Endothelial cell of umbilical vein (primary cell): ENCODE measurements at regions of chr4 and their contacts with region 1.

Region 1: DNA sequence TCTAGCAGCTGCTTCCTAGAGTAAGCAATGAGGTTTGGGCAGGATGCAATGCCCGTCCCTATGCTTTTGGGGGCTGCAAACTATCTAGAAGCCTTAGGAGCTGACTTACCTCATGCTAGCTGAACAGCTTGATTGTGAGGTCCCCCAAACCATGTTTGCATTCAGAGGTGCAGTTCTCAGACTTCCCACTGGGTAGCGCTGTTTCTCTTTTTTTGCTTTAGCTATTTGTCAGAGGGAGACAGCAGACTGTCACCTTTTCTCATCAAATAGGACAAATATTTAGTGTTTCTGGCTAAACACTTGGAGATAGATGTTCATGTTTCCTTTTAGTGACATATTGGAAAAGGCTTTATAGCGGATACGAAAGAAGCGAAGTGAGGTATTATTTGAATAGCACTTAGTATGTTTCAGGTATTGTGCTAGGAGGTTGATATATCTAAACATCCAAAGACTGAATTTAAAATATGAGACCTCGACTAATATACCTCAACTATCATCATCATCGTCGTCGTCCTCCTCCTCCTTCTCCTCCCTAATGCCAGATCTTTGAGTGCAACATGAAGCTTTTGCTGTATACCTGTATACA is 18.7 kb upstream of the TMEM192 start:
- DNase-seq: peak; percentile 73
- H3K4me3 ChIP-seq: no peak overlapping the region
- H3K27ac ChIP-seq: no peak overlapping the region
- H3K4me1 ChIP-seq: no peaks in the 10 kb centered on the region
- H3K27me3 ChIP-seq: peaks cover 5 to 12% of the 10 kb centered on the region in 2 experiments
- CTCF ChIP-seq: peak; percentile 81 to 84
- POLR2A ChIP-seq: no peak

Region 2: GRCh38 chr4:163795885-163796284 is 1335.5 kb before region 1 on chr4:
- CTCF ChIA-PET with region 1: no interaction called
- POLR2A ChIA-PET with region 1: no interaction called
- dilution Hi-C with region 1: no loop called
- intact Hi-C with region 1: no loop called
- DNase-seq: no peak
- H3K4me3 ChIP-seq: no peak overlapping the region
- H3K27ac ChIP-seq: no peak overlapping the region
- H3K4me1 ChIP-seq: no peaks in the 10 kb centered on the region
- H3K27me3 ChIP-seq: no peaks in the 10 kb centered on the region
- CTCF ChIP-seq: no peak
- POLR2A ChIP-seq: no peak

Region 3: GRCh38 chr4:165085946-165086345 is 45.4 kb before region 1 on chr4:
- CTCF ChIA-PET with region 1: no interaction called
- POLR2A ChIA-PET with region 1: no interaction called
- dilution Hi-C with region 1: no loop called
- intact Hi-C with region 1: no loop called
- DNase-seq: no peak
- H3K4me3 ChIP-seq: no peak overlapping the region
- H3K27ac ChIP-seq: no peak overlapping the region
- H3K4me1 ChIP-seq: no peaks in the 10 kb centered on the region
- H3K27me3 ChIP-seq: no peaks in the 10 kb centered on the region
- CTCF ChIP-seq: no peak
- POLR2A ChIP-seq: no peak

Region 4: GRCh38 chr4:165118256-165118909 is 13.0 kb before region 1 on chr4:
- CTCF ChIA-PET with region 1: interaction called, 47 read pairs
- POLR2A ChIA-PET with region 1: no interaction called
- dilution Hi-C with region 1: no loop called
- intact Hi-C with region 1: no loop called
- DNase-seq: no peak
- H3K4me3 ChIP-seq: no peak overlapping the region
- H3K27ac ChIP-seq: no peak overlapping the region
- H3K4me1 ChIP-seq: peaks cover under 1% of the 10 kb centered on the region
- H3K27me3 ChIP-seq: no peaks in the 10 kb centered on the region
- CTCF ChIP-seq: no peak
- POLR2A ChIP-seq: no peak

Region 5: DNA sequence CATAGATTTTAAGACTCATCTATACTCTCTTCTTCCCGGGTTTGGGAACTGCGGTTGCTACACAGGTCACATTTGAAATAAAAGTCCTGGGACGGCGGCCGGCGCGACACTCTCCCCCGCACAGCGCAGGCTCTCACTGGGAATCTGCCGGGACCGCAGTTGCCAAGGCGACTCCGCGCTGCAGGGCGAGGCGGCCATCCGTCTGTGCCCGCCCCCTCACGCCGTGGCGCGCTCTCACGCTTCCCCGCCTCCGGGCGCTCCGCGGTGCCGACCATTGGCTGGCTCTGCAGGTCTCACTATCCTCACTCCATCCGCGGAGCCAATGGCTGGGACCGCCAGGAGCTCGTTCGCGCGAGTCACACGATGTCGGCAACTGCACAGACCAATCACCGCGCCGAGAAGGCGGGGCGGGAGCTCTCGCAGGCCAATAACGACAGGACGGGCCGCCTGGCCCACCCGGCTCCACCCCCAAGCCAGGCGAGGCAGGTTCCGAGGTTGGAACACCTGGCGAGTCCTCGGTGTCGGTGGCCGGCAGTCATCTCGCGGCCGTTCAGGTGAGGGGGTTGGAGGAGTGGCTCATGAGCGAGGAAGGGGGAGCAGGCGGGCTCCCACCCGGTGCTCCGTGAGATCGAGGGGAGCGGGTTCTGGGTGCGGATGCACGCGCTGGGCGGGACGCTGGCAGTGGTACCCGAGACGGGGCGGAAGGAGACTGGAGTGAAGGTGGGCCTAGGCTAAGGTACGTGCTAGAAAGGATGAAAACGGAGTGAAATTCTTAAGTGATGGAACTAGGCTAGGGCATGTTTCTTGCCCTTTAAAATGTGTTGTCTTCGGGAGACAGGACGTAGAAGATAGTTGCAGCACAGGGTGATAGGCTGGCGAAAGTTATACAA is 196.1 kb after region 1 on chr4 and contains the start of gene MSMO1:
- CTCF ChIA-PET with region 1: interaction called, 50 read pairs
- POLR2A ChIA-PET with region 1: no interaction called
- dilution Hi-C with region 1: no loop called
- intact Hi-C with region 1: loop called (anchors 1 kb)
- DNase-seq: peak; percentile 100
- H3K4me3 ChIP-seq: peak within 1 kb of the TSS; percentile 80 to 98 (median 96)
- H3K27ac ChIP-seq: peak within 1 kb of the TSS; percentile 64
- H3K4me1 ChIP-seq: peaks cover 58% of the 10 kb centered on the region
- H3K27me3 ChIP-seq: no peaks in the 10 kb centered on the region
- CTCF ChIP-seq: no peak
- POLR2A ChIP-seq: no peak
- total RNA-seq, gene MSMO1: 109 and 127 TPM in 2 replicates

Region 6: DNA sequence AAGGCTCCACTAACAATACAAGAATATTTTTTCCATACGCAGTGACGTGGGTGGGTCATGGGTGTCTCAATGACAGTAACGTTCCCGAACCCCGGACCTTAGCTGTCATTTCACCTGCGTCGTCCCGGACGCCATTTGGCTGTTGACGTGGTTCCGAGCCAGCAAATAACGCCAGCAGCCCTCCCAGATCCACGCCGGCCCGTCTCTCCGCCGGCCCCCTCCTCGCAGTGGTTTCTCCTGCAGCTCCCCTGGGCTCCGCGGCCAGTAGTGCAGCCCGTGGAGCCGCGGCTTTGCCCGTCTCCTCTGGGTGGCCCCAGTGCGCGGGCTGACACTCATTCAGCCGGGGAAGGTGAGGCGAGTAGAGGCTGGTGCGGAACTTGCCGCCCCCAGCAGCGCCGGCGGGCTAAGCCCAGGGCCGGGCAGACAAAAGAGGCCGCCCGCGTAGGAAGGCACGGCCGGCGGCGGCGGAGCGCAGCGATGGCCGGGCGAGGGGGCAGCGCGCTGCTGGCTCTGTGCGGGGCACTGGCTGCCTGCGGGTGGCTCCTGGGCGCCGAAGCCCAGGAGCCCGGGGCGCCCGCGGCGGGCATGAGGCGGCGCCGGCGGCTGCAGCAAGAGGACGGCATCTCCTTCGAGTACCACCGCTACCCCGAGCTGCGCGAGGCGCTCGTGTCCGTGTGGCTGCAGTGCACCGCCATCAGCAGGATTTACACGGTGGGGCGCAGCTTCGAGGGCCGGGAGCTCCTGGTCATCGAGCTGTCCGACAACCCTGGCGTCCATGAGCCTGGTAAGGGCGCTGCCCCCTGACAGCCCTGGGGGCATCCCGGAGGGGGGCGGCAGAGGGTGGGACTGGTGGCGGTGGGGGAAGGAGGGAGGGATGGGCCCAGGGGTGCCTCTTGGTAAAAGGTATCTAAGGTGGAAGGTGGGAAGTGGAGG is 247.7 kb after region 1 on chr4 and contains the start of gene CPE:
- CTCF ChIA-PET with region 1: interaction called, 23 read pairs
- POLR2A ChIA-PET with region 1: no interaction called
- dilution Hi-C with region 1: no loop called
- intact Hi-C with region 1: no loop called
- DNase-seq: peak; percentile 80
- H3K4me3 ChIP-seq: peak within 1 kb of the TSS; percentile 30 to 70 (median 49)
- H3K27ac ChIP-seq: no peak within 1 kb of the TSS
- H3K4me1 ChIP-seq: peaks cover 4% of the 10 kb centered on the region
- H3K27me3 ChIP-seq: peaks cover 2 to 4% of the 10 kb centered on the region in 2 experiments
- CTCF ChIP-seq: peak; percentile 37 to 89
- POLR2A ChIP-seq: no peak
- total RNA-seq, gene CPE: 8.1 and 9.2 TPM in 2 replicates

Region 7: DNA sequence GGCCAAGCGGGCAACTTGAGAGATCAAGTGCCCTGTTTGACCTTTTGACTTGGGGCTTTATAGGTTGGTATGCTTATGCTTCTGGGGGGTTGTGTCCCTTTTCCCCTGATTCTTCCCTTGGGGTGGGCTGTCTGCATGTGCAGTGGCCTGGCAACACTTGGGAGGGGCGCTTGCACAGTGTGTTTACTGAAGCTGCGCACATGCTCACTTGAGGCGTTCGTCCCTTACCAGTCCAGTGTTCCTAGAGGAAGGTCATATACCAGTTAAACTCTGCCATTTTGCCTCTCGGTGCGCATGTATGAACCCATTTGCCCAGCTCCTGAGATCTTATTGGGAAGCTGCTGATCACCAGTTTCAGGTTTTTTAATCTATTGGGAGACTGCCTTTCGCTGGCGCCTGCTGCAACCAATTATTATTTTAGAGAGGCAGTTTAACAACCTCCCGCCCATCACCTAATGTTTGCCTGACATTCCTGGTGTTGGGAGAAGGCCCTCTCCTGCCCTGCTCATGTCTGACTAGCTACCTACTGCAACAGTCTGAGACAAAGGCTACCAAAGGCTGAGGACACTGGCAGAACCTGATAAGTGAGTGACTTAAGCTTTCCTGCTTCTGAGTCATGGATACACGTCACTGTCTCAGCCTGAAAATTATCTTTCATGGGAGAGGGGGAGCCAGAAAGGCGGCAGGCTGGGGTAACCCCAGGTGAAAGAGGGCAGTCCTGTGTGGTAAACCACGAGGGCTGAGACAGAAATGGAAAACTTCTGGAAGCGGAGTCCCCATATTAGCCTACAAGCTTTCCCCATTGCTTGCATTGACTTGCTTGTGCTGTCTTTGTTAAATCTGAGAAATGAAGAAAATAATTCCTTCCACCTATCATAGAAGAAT is 345.1 kb after region 1 on chr4:
- CTCF ChIA-PET with region 1: interaction called, 10 read pairs
- POLR2A ChIA-PET with region 1: no interaction called
- dilution Hi-C with region 1: no loop called
- intact Hi-C with region 1: no loop called
- DNase-seq: peak; percentile 33
- H3K4me3 ChIP-seq: no peak overlapping the region
- H3K27ac ChIP-seq: no peak overlapping the region
- H3K4me1 ChIP-seq: no peaks in the 10 kb centered on the region
- H3K27me3 ChIP-seq: no peaks in the 10 kb centered on the region
- CTCF ChIP-seq: no peak
- POLR2A ChIP-seq: no peak